ENCODE measurements at regions of chr12 and their contacts with region 1.

Region 1: GRCh38 chr12:50132505-50133135 is 20.6 kb downstream of the COX14 start:
- DNase-seq: peak in 1 of 2 experiments; percentile 67
- H3K4me3 ChIP-seq: no peak overlapping the region
- H3K4me3 Mint-ChIP-seq: no peak overlapping the region
- H3K27ac Mint-ChIP-seq: peak overlapping the region; percentile 31
- H3K4me1 ChIP-seq: no peaks in the 10 kb centered on the region
- H3K4me1 Mint-ChIP-seq: no peaks in the 10 kb centered on the region
- H3K27me3 ChIP-seq: no peaks in the 10 kb centered on the region
- H3K27me3 Mint-ChIP-seq: no peaks in the 10 kb centered on the region
- CTCF ChIP-seq: peak; percentile 73 to 77

Region 2: DNA sequence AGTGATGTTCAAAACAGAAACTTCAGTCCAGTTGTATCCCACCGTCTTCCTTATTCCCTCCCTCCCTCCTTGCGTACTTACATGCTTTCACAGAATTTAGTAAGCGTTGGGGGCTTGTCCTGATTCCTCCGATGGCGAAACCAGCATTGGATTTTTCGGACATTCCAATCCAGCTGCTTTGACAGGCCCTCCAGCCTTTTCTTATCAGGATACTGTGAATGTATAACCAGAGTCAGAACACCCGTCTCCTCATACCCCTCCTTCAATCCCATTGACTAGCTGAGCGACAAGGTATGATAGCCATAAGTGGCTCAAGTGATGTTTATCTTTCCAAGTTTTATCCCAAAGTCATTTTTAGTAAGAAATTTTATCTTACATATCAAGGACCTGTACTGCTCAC is 10.4 kb after region 1 on chr12:
- CTCF ChIA-PET with region 1: interaction called, 13 read pairs
- POLR2A ChIA-PET with region 1: no interaction called
- intact Hi-C with region 1: no loop called
- DNase-seq: peak; percentile 74 to 81
- H3K4me3 ChIP-seq: no peak overlapping the region
- H3K4me3 Mint-ChIP-seq: peak overlapping the region; percentile 53
- H3K27ac Mint-ChIP-seq: peak overlapping the region; percentile 33
- H3K4me1 ChIP-seq: peaks cover 29% of the 10 kb centered on the region
- H3K4me1 Mint-ChIP-seq: peaks cover 23% of the 10 kb centered on the region
- H3K27me3 ChIP-seq: no peaks in the 10 kb centered on the region
- H3K27me3 Mint-ChIP-seq: no peaks in the 10 kb centered on the region
- CTCF ChIP-seq: no peak

Region 3: GRCh38 chr12:50167041-50167828 is 34.6 kb after region 1 on chr12 and contains the start of gene CERS5:
- CTCF ChIA-PET with region 1: interaction called, 16 read pairs
- POLR2A ChIA-PET with region 1: interaction called, 20 read pairs
- intact Hi-C with region 1: loop called (anchors 2 kb)
- DNase-seq: peak; percentile 99 to 100
- H3K4me3 ChIP-seq: peak within 1 kb of the TSS; percentile 63
- H3K4me3 Mint-ChIP-seq: peak within 1 kb of the TSS; percentile 80
- H3K27ac Mint-ChIP-seq: peak within 1 kb of the TSS; percentile 77
- H3K4me1 ChIP-seq: peaks cover 11% of the 10 kb centered on the region; the same call in 1 of the 2 replicates
- H3K4me1 Mint-ChIP-seq: peaks cover 8% of the 10 kb centered on the region
- H3K27me3 ChIP-seq: no peaks in the 10 kb centered on the region
- H3K27me3 Mint-ChIP-seq: no peaks in the 10 kb centered on the region
- CTCF ChIP-seq: peak in 1 of 2 experiments; percentile 64
- total RNA-seq, gene CERS5: 61.6 and 62.6 TPM in 2 replicates

Region 4: GRCh38 chr12:50174971-50175715 is 42.5 kb after region 1 on chr12:
- CTCF ChIA-PET with region 1: interaction called, 13 read pairs
- POLR2A ChIA-PET with region 1: no interaction called
- intact Hi-C with region 1: loop called (anchors 1 kb)
- DNase-seq: peak in 1 of 2 experiments; percentile 80
- H3K4me3 ChIP-seq: no peak overlapping the region
- H3K4me3 Mint-ChIP-seq: no peak overlapping the region
- H3K27ac Mint-ChIP-seq: no peak overlapping the region
- H3K4me1 ChIP-seq: peaks cover 6% of the 10 kb centered on the region; the same call in 1 of the 2 replicates
- H3K4me1 Mint-ChIP-seq: no peaks in the 10 kb centered on the region
- H3K27me3 ChIP-seq: no peaks in the 10 kb centered on the region
- H3K27me3 Mint-ChIP-seq: no peaks in the 10 kb centered on the region
- CTCF ChIP-seq: peak; percentile 45 to 72

Region 5: GRCh38 chr12:50275556-50275955 is 142.9 kb after region 1 on chr12:
- CTCF ChIA-PET with region 1: no interaction called
- POLR2A ChIA-PET with region 1: no interaction called
- intact Hi-C with region 1: no loop called
- DNase-seq: no peak
- H3K4me3 ChIP-seq: no peak overlapping the region
- H3K4me3 Mint-ChIP-seq: no peak overlapping the region
- H3K27ac Mint-ChIP-seq: peak overlapping the region; percentile 59
- H3K4me1 ChIP-seq: peaks cover 58% of the 10 kb centered on the region
- H3K4me1 Mint-ChIP-seq: peaks cover 42% of the 10 kb centered on the region
- H3K27me3 ChIP-seq: no peaks in the 10 kb centered on the region
- H3K27me3 Mint-ChIP-seq: no peaks in the 10 kb centered on the region
- CTCF ChIP-seq: no peak

Region 6: DNA sequence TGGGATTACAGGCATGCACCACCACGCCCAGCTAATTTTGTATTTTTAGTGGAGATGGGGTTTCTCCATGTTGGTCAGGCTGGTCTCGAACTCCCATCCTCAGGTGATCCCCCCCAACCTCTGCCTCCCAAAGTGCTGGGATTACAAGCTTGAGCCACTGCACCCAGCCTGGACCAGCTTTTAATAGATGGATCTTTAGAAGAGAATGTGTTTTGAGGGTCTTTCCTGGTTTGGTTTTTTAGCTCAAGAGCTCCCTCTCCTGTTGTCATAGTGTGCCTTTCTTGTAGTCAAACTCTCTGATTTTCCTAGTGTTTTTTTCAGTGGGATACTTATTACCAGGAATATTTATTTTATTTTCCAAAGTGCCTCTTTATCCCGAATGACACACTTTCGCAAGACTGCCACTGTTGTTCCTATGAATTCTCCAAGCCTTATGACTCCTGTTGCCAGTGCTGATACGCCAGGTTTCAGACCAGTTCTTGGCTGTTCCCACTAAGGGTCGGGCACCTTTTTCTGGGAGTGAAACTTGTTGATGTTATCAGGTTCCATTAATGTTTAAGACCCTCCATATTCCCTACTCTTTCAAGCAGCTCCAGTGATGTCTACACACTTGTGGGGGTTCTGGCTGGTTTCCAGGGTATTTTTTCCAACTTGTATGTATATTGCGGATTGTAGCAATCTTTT is 182.2 kb after region 1 on chr12:
- CTCF ChIA-PET with region 1: interaction called, 12 read pairs
- POLR2A ChIA-PET with region 1: no interaction called
- intact Hi-C with region 1: loop called (anchors 1 kb)
- DNase-seq: peak in 1 of 2 experiments; percentile 56
- H3K4me3 ChIP-seq: no peak overlapping the region
- H3K4me3 Mint-ChIP-seq: no peak overlapping the region
- H3K27ac Mint-ChIP-seq: no peak overlapping the region
- H3K4me1 ChIP-seq: no peaks in the 10 kb centered on the region
- H3K4me1 Mint-ChIP-seq: no peaks in the 10 kb centered on the region
- H3K27me3 ChIP-seq: no peaks in the 10 kb centered on the region
- H3K27me3 Mint-ChIP-seq: no peaks in the 10 kb centered on the region
- CTCF ChIP-seq: peak; percentile 76 to 79